Ovary (tissue), 10 donors: ENCODE measurements at regions of chrX and their contacts with region 1.

Region 1: DNA sequence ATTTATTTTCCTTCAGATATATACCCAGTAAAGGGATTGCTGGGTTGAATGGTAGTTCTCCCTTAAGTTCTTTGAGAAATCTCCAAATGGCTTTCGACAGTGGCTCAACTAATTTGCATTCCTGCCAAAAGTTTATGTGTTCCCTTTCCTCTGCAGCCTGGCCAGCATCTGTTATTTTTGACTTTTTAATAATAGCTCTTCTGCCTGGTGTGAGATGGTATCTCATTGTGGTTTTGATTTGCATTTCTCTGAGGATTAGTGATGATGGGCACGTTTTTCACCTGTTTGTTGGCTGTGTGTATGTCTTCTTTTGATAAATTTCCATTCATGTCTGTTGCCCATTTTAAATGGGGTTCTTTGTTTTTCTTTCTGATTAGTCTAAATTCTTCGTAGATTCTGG is 375.2 kb downstream of the UBE2NL start:
- DNase-seq: no peak
- H3K4me3 ChIP-seq: no peak overlapping the region
- H3K27ac ChIP-seq: no peak overlapping the region
- H3K4me1 ChIP-seq: no peaks in the 10 kb centered on the region
- H3K27me3 ChIP-seq: no peaks in the 10 kb centered on the region
- CTCF ChIP-seq: no peak
- EP300 ChIP-seq: no peak
- POLR2A ChIP-seq: no peak

Region 2: DNA sequence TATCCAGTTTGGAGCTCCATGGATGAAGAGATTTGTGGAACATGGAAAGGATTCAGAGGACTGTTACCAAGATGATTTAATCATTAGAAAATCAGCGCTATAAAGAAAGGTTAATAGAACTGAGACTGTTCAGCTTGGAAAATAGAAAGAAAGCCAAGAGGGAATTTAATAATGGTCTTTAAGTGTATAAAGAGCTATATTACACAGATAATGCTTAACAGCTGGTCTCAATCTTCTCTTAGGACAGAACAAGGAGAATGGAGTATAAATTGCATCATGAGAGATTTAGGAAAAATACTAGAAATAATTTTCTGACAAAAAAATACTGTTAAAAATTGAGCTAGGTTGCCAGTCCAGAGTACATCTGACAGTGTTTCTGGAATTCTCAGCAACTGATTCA is 1962.6 kb before region 1 on chrX:
- intact Hi-C with region 1: loop called in 1 of 4 experiments (anchors 5 kb)
- DNase-seq: no peak
- H3K4me3 ChIP-seq: no peak overlapping the region
- H3K27ac ChIP-seq: no peak overlapping the region
- H3K4me1 ChIP-seq: no peaks in the 10 kb centered on the region
- H3K27me3 ChIP-seq: no peaks in the 10 kb centered on the region
- CTCF ChIP-seq: no peak
- EP300 ChIP-seq: no peak
- POLR2A ChIP-seq: no peak

Region 3: DNA sequence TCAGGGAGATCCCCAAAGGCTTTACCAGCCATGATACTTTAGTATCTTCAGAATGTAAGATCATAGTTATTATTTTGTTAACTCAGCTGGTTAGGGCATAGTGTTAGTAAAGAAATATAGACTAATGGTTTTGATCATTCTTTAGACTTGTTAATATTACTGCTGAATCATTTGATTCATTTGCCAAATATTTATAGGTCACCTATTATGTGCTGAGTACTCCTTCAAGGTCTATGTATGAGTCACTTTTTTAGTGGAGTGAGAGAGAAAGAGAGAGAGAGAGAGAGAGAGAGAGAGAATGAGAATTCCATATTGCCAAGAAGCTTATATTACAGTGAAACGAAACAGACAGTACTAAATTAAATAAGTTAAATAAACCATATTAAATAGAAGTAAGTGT is 264.8 kb before region 1 on chrX:
- intact Hi-C with region 1: no loop called
- DNase-seq: no peak
- H3K4me3 ChIP-seq: no peak overlapping the region
- H3K27ac ChIP-seq: no peak overlapping the region
- H3K4me1 ChIP-seq: no peaks in the 10 kb centered on the region
- H3K27me3 ChIP-seq: no peaks in the 10 kb centered on the region
- CTCF ChIP-seq: no peak
- EP300 ChIP-seq: no peak
- POLR2A ChIP-seq: no peak